Activated CD4-positive, alpha-beta memory T cell treated with anti-CD3 and anti-CD28 coated beads for 36 hours (primary cell): ENCODE measurements at regions of chr19 and their contacts with region 1.

Region 1: GRCh38 chr19:35154525-35155406 is at the start of gene FXYD5:
- DNase-seq: peak; percentile 93
- H3K4me3 Mint-ChIP-seq: peak within 1 kb of the TSS; percentile 98
- H3K27ac Mint-ChIP-seq: peak within 1 kb of the TSS; percentile 99
- H3K4me1 Mint-ChIP-seq: peaks cover 50% of the 10 kb centered on the region
- H3K27me3 Mint-ChIP-seq: no peaks in the 10 kb centered on the region
- total RNA-seq, gene FXYD5: 334 to 360 TPM

Region 2: DNA sequence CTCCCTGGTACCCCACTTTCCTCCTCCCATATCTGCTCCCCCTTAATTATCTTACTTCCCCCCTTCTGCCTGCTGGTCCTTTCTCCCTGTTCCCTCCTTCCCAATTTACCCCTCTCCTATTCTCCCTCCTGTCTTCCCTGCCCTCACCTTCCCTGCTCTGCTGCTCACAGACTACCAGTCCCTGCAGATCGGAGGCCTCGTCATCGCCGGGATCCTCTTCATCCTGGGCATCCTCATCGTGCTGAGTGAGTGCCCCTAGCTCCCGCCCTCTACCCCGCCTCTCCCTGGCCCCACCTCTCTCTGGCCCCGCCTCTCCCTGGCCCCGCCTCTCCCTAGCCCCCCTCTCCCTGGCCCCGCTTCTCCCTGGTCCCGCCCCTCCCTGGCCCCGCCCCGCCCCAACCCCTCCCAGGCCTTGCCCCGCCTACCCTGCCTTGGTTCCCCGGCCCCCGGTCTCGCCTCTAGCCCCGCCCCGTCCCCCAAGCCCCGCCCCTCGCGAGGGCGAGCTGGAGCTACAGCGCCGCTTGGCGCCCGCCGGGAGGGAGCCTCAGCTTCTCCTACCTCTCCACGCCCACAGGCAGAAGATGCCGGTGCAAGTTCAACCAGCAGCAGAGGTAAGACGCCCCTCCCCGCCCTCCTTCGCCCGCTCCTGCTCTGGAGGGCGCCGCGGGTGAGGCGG is 13.7 kb before region 1 on chr19:
- CTCF ChIA-PET with region 1: interaction called, 81 read pairs
- POLR2A ChIA-PET with region 1: interaction called, 20 read pairs
- intact Hi-C with region 1: no loop called
- DNase-seq: peak; percentile 99
- H3K4me3 Mint-ChIP-seq: peak overlapping the region; percentile 71
- H3K27ac Mint-ChIP-seq: no peak overlapping the region
- H3K4me1 Mint-ChIP-seq: peaks cover 30% of the 10 kb centered on the region
- H3K27me3 Mint-ChIP-seq: no peaks in the 10 kb centered on the region

Region 3: GRCh38 chr19:35247526-35248306 is 93.0 kb after region 1 on chr19:
- CTCF ChIA-PET with region 1: no interaction called
- POLR2A ChIA-PET with region 1: no interaction called
- intact Hi-C with region 1: loop called (anchors 1 kb)
- DNase-seq: peak; percentile 76
- H3K4me3 Mint-ChIP-seq: peak overlapping the region; percentile 86
- H3K27ac Mint-ChIP-seq: peak overlapping the region; percentile 96
- H3K4me1 Mint-ChIP-seq: peaks cover 44% of the 10 kb centered on the region
- H3K27me3 Mint-ChIP-seq: peaks cover 1% of the 10 kb centered on the region

Region 4: GRCh38 chr19:35269421-35270117 is 114.8 kb after region 1 on chr19:
- CTCF ChIA-PET with region 1: interaction called, 6 read pairs
- POLR2A ChIA-PET with region 1: interaction called, 3 read pairs
- intact Hi-C with region 1: loop called (anchors 2 kb)
- DNase-seq: peak; percentile 88
- H3K4me3 Mint-ChIP-seq: peak overlapping the region; percentile 56
- H3K27ac Mint-ChIP-seq: peak overlapping the region; percentile 74
- H3K4me1 Mint-ChIP-seq: peaks cover 28% of the 10 kb centered on the region
- H3K27me3 Mint-ChIP-seq: no peaks in the 10 kb centered on the region